ENCODE measurements at regions of chr5 and their contacts with region 1.

Region 1: GRCh38 chr5:121763665-121764064 is 88.0 kb upstream of the FTMT start:
- DNase-seq: no peak
- ATAC-seq: no peak
- H3K4me3 ChIP-seq: no peak overlapping the region
- H3K27ac ChIP-seq: no peak overlapping the region
- H3K4me1 ChIP-seq: no peaks in the 10 kb centered on the region
- H3K27me3 ChIP-seq: no peaks in the 10 kb centered on the region
- CTCF ChIP-seq: no peak
- EP300 ChIP-seq: no peak
- POLR2A ChIP-seq: no peak
- RAD21 ChIP-seq: no peak

Region 2: GRCh38 chr5:121726991-121727390 is 36.7 kb before region 1 on chr5:
- CTCF ChIA-PET with region 1: no interaction called
- POLR2A ChIA-PET with region 1: no interaction called
- in situ Hi-C with region 1: no loop called
- intact Hi-C with region 1: loop called (anchors 1 kb)
- DNase-seq: no peak
- ATAC-seq: no peak
- H3K4me3 ChIP-seq: no peak overlapping the region
- H3K27ac ChIP-seq: no peak overlapping the region
- H3K4me1 ChIP-seq: no peaks in the 10 kb centered on the region
- H3K27me3 ChIP-seq: no peaks in the 10 kb centered on the region
- CTCF ChIP-seq: no peak
- EP300 ChIP-seq: no peak
- POLR2A ChIP-seq: no peak
- RAD21 ChIP-seq: no peak